ENCODE measurements at regions of chr22 and their contacts with region 1.

Region 1: GRCh38 chr22:39212721-39213376 is 31.9 kb downstream of the PDGFB start:
- DNase-seq: no peak
- H3K4me3 ChIP-seq: no peak overlapping the region
- H3K27ac ChIP-seq: no peak overlapping the region
- H3K4me1 ChIP-seq: no peaks in the 10 kb centered on the region
- H3K27me3 ChIP-seq: no peaks in the 10 kb centered on the region
- CTCF ChIP-seq: no peak

Region 2: GRCh38 chr22:37518509-37519267 is 1694.2 kb before region 1 on chr22:
- CTCF ChIA-PET with region 1: no interaction called
- POLR2A ChIA-PET with region 1: interaction called, 11 read pairs
- intact Hi-C with region 1: no loop called
- DNase-seq: no peak
- H3K4me3 ChIP-seq: peak overlapping the region; percentile 47
- H3K27ac ChIP-seq: no peak overlapping the region
- H3K4me1 ChIP-seq: peaks cover 6% of the 10 kb centered on the region
- H3K27me3 ChIP-seq: peaks cover 13% of the 10 kb centered on the region
- CTCF ChIP-seq: no peak

Region 3: DNA sequence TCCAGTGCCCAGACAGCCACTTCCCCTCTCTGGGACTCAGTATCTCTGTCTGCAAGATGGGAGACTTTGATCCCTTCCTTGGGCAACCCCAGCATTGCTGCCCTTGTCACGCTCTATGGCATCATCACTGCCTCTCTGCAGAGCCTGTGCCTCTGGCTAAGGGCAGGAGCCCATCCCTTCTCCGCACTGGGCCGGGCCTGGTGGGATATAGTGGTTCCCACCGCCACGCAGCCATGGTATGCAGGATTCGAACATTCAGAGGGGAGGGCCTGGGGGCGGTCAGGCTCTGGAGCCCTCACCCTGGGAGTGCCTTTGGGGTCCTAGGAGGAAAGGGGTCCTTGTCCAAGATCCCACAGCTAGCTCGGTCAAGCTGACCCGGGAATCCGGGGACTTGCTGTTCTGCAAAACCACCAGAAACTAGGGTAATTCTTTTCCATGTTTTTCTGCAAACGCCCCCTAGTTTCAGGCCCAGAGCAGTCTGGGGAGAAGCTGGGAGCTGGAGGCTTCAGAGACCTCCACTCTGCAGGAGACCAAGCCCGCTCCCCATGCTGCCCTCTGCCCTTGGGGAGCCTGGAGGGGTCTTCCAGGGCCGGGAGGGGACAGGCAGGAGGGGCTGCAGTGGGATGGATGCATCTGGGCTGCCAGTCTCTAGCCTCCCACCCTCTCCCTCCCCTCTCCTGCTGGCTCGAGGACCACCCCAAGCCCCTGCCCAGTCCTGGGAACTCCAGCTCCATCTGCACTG is 36.0 kb before region 1 on chr22:
- CTCF ChIA-PET with region 1: interaction called, 15 read pairs
- POLR2A ChIA-PET with region 1: no interaction called
- intact Hi-C with region 1: no loop called
- DNase-seq: no peak
- H3K4me3 ChIP-seq: no peak overlapping the region
- H3K27ac ChIP-seq: no peak overlapping the region
- H3K4me1 ChIP-seq: peaks cover 20% of the 10 kb centered on the region
- H3K27me3 ChIP-seq: no peaks in the 10 kb centered on the region
- CTCF ChIP-seq: no peak